ENCODE measurements at regions of chr10 and their contacts with region 1.

Region 1: GRCh38 chr10:6778992-6779701 is 199.1 kb upstream of the PRKCQ start:
- DNase-seq: peak; percentile 99
- H3K4me3 ChIP-seq: peak overlapping the region in 2 of 3 experiments; percentile 43 to 54
- H3K27ac ChIP-seq: peak overlapping the region; percentile 98
- H3K4me1 ChIP-seq: peaks cover 33% of the 10 kb centered on the region
- H3K27me3 ChIP-seq: no peaks in the 10 kb centered on the region
- CTCF ChIP-seq: no peak

Region 2: DNA sequence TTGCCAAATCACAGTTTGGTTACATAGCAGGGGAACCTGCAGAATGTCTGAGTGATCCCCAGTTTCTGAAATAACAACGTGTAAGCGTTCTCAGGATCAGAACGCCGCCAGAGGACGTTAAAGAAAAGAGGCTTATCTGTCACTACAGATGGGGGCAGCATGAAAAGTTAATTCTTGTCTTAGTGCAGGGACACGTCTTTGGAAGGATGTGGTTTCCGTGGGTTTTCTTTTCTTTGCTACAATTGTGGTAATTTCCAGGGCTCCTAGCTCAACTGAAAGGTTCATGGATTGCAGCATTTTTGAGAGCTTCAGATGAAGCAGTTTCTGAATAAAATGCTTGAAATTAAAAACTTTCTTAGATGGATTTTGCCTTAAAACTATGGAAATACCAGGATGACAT is 305.7 kb before region 1 on chr10:
- CTCF ChIA-PET with region 1: no interaction called
- dilution Hi-C with region 1: no loop called
- in situ Hi-C with region 1: no loop called
- intact Hi-C with region 1: no loop called
- DNase-seq: peak; percentile 12
- H3K4me3 ChIP-seq: no peak overlapping the region
- H3K27ac ChIP-seq: no peak overlapping the region
- H3K4me1 ChIP-seq: peaks cover 18% of the 10 kb centered on the region
- H3K27me3 ChIP-seq: no peaks in the 10 kb centered on the region
- CTCF ChIP-seq: no peak

Region 3: GRCh38 chr10:6729071-6729774 is 49.9 kb before region 1 on chr10:
- CTCF ChIA-PET with region 1: no interaction called
- dilution Hi-C with region 1: loop called (anchors 5 kb)
- in situ Hi-C with region 1: loop called in 1 of 2 experiments (anchors 10 kb)
- intact Hi-C with region 1: no loop called
- DNase-seq: peak; percentile 89
- H3K4me3 ChIP-seq: no peak overlapping the region
- H3K27ac ChIP-seq: peak overlapping the region; percentile 56
- H3K4me1 ChIP-seq: peaks cover 18% of the 10 kb centered on the region
- H3K27me3 ChIP-seq: no peaks in the 10 kb centered on the region
- CTCF ChIP-seq: no peak

Region 4: GRCh38 chr10:6737758-6738505 is 41.2 kb before region 1 on chr10:
- CTCF ChIA-PET with region 1: no interaction called
- dilution Hi-C with region 1: no loop called
- in situ Hi-C with region 1: no loop called
- intact Hi-C with region 1: loop called (anchors 1 kb)
- DNase-seq: peak; percentile 74
- H3K4me3 ChIP-seq: peak overlapping the region; percentile 64 to 80 (median 64)
- H3K27ac ChIP-seq: peak overlapping the region; percentile 91
- H3K4me1 ChIP-seq: peaks cover 38% of the 10 kb centered on the region
- H3K27me3 ChIP-seq: no peaks in the 10 kb centered on the region
- CTCF ChIP-seq: no peak

Region 5: GRCh38 chr10:6748978-6749635 is 30.0 kb before region 1 on chr10:
- CTCF ChIA-PET with region 1: no interaction called
- dilution Hi-C with region 1: no loop called
- in situ Hi-C with region 1: no loop called
- intact Hi-C with region 1: loop called (anchors 2 kb)
- DNase-seq: peak; percentile 90
- H3K4me3 ChIP-seq: no peak overlapping the region
- H3K27ac ChIP-seq: peak overlapping the region; percentile 71
- H3K4me1 ChIP-seq: peaks cover 22% of the 10 kb centered on the region
- H3K27me3 ChIP-seq: no peaks in the 10 kb centered on the region
- CTCF ChIP-seq: no peak